ENCODE measurements at regions of chr12 and their contacts with region 1.

Region 1: GRCh38 chr12:23204933-23205778 is 580.2 kb downstream of the ETNK1 start:
- DNase-seq: peak in 1 of 2 donors; percentile 62
- H3K4me3 ChIP-seq: no peak overlapping the region
- H3K27ac ChIP-seq: no peak overlapping the region
- H3K4me1 ChIP-seq: no peaks in the 10 kb centered on the region
- H3K27me3 ChIP-seq: no peaks in the 10 kb centered on the region
- CTCF ChIP-seq: peak; percentile 66 to 93 (median 87)

Region 2: GRCh38 chr12:22856178-22856577 is 349.0 kb before region 1 on chr12:
- intact Hi-C with region 1: loop called (anchors 5 kb)
- DNase-seq: no peak
- H3K4me3 ChIP-seq: no peak overlapping the region
- H3K27ac ChIP-seq: no peak overlapping the region
- H3K4me1 ChIP-seq: no peaks in the 10 kb centered on the region
- H3K27me3 ChIP-seq: no peaks in the 10 kb centered on the region
- CTCF ChIP-seq: peak; percentile 32 to 76 (median 60)

Region 3: DNA sequence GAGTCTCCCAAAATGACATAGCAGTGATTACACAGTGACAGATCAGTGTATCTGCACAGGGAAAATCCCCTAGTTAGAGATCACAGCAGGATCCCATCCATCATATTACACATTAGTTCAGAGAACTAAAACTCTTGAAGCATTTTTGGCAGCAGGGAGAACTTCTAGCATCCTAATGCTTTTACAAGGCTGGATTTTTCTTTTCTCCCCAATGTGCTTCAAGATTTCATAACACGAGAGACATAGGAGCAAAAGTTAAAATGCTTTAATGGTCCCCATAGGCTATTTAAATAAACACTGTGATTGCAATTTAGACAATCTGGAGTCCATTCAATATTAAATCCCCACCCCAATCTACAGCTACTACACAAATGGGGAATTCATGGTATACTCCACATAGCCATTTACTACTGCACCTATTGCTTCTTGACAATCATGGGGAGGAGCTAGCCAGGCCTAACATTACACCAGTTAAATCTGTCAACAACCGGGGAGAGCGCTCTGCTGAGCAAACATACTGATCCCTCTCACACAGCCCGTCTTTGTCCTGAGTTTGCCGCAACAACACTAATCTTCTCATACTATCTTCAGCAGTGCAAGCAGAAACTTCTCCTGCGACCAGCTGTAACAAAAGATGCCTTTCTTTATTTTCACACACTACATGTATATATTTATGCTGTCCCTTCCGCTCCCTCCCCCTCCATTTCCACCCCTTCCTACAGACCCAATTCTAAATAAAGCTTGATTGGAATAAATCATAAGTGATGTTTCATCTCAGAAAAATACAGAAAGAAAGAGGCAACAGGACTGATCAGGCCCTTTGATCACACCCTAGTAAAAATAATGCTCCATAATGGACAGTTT is 864.6 kb after region 1 on chr12:
- intact Hi-C with region 1: loop called (anchors 10 kb)
- DNase-seq: no peak
- H3K4me3 ChIP-seq: no peak overlapping the region
- H3K27ac ChIP-seq: no peak overlapping the region
- H3K4me1 ChIP-seq: peaks cover 0 to 7% of the 10 kb centered on the region in 2 donors
- H3K27me3 ChIP-seq: no peaks in the 10 kb centered on the region
- CTCF ChIP-seq: no peak

Region 4: GRCh38 chr12:24728366-24728765 is 1523.2 kb after region 1 on chr12:
- intact Hi-C with region 1: loop called (anchors 5 kb)
- DNase-seq: no peak
- H3K4me3 ChIP-seq: no peak overlapping the region
- H3K27ac ChIP-seq: no peak overlapping the region
- H3K4me1 ChIP-seq: no peaks in the 10 kb centered on the region
- H3K27me3 ChIP-seq: no peaks in the 10 kb centered on the region
- CTCF ChIP-seq: peak; percentile 20 to 67 (median 46)

Measured in ascending aorta (tissue), 2 donors.